Activated CD8-positive, alpha-beta T cell treated with anti-CD3 and anti-CD28 coated beads, Interleukin-2, amount 10 ng/mL, durations not matched to agents 7 days and 5 days (primary cell): ENCODE measurements at regions of chr7 and their contacts with region 1.

Region 1: DNA sequence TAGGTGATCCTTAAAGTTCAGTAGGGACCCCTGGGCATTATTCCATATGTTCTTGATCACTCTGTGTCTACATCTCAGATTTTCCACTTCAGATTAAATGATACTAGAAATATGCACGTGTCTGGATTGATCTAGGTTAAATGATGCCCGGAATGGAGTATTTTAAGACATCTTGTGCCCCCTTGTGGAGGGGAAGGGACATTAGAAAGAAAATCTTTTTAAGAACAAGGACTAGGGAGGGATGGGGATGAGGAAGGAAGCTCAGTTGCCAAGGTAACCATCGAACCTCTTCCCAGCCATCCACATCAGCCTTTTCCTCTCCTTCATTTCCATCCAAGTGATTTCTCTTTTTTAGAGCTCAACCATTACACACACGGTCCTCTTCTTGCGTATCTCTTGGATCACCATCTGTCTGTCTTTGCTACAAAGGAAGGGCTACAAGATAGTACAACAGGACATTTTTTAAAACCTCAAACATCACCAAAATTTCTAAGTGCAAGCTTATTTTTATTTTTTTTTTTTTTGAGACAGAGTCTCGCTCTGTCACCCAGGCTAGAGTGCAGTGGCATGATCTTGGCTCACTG is 40.5 kb downstream of the PRSS2 start:
- DNase-seq: peak; percentile 71
- ATAC-seq: no peak
- H3K4me3 Mint-ChIP-seq: peak overlapping the region; percentile 54
- H3K27ac Mint-ChIP-seq: peak overlapping the region; percentile 88
- H3K4me1 Mint-ChIP-seq: peaks cover 72% of the 10 kb centered on the region
- H3K27me3 Mint-ChIP-seq: peaks cover 2% of the 10 kb centered on the region

Region 2: GRCh38 chr7:141975806-141976523 is 835.3 kb before region 1 on chr7:
- CTCF ChIA-PET with region 1: interaction called, 10 read pairs
- POLR2A ChIA-PET with region 1: no interaction called
- DNase-seq: peak; percentile 77
- ATAC-seq: peak; percentile 91
- H3K4me3 Mint-ChIP-seq: peak overlapping the region; percentile 63
- H3K27ac Mint-ChIP-seq: peak overlapping the region; percentile 1
- H3K4me1 Mint-ChIP-seq: peaks cover 22% of the 10 kb centered on the region
- H3K27me3 Mint-ChIP-seq: no peaks in the 10 kb centered on the region

Region 3: DNA sequence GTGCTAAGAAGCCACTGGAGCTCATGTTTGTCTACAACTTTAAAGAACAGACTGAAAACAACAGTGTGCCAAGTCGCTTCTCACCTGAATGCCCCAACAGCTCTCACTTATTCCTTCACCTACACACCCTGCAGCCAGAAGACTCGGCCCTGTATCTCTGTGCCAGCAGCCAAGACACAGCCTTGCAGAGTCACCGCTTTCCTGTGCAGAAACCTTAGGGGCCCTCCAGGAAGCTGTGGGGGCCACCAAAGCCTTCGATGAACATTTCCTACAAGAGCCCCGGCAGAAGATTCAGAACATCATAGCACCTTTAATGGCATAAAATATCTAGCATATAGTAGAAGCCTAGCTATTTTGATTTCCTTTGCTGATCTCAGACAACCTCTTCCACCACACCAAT is 465.4 kb before region 1 on chr7:
- CTCF ChIA-PET with region 1: interaction called, 7 read pairs
- POLR2A ChIA-PET with region 1: interaction called, 15 read pairs
- DNase-seq: peak; percentile 73
- ATAC-seq: peak; percentile 93
- H3K4me3 Mint-ChIP-seq: peak overlapping the region; percentile 47
- H3K27ac Mint-ChIP-seq: peak overlapping the region; percentile 79
- H3K4me1 Mint-ChIP-seq: peaks cover 27% of the 10 kb centered on the region
- H3K27me3 Mint-ChIP-seq: peaks cover 5% of the 10 kb centered on the region

Region 4: GRCh38 chr7:142587578-142588191 is 223.6 kb before region 1 on chr7:
- CTCF ChIA-PET with region 1: interaction called, 11 read pairs
- POLR2A ChIA-PET with region 1: interaction called, 5 read pairs
- DNase-seq: peak; percentile 43
- ATAC-seq: peak; percentile 89
- H3K4me3 Mint-ChIP-seq: peak overlapping the region; percentile 17
- H3K27ac Mint-ChIP-seq: no peak overlapping the region
- H3K4me1 Mint-ChIP-seq: no peaks in the 10 kb centered on the region
- H3K27me3 Mint-ChIP-seq: no peaks in the 10 kb centered on the region

Region 5: GRCh38 chr7:142711746-142712619 is 99.3 kb before region 1 on chr7:
- CTCF ChIA-PET with region 1: interaction called, 33 read pairs
- POLR2A ChIA-PET with region 1: interaction called, 19 read pairs
- DNase-seq: peak; percentile 70
- ATAC-seq: peak; percentile 83
- H3K4me3 Mint-ChIP-seq: peak overlapping the region; percentile 74
- H3K27ac Mint-ChIP-seq: peak overlapping the region; percentile 95
- H3K4me1 Mint-ChIP-seq: peaks cover 84% of the 10 kb centered on the region
- H3K27me3 Mint-ChIP-seq: no peaks in the 10 kb centered on the region

Region 6: DNA sequence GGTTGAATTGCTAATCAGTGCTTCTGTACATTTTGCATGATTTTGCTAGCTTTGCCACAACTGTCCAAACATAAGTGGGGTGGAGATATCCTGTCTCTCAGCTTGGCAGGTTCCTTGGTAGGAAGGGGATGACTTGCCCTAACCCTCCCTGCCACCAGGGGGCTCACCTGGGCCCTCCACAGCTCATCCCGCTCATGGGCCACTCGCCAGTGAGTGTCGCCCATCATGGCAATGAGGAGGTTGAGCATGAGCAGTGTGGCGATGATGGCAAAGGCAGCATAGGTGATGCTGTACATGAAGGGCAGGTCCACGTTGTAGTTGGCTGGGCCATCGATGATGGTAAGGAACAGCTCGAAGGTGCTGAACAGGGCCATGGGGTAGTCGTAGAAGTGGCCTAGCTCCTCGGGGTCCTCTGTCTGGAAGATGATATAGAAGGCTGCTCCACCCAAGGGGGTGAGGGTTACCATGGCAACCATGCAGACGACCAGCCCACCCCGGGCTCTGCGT is 62.1 kb after region 1 on chr7:
- CTCF ChIA-PET with region 1: interaction called, 13 read pairs
- POLR2A ChIA-PET with region 1: no interaction called
- DNase-seq: peak; percentile 45
- ATAC-seq: peak; percentile 43
- H3K4me3 Mint-ChIP-seq: no peak overlapping the region
- H3K27ac Mint-ChIP-seq: no peak overlapping the region
- H3K4me1 Mint-ChIP-seq: no peaks in the 10 kb centered on the region
- H3K27me3 Mint-ChIP-seq: no peaks in the 10 kb centered on the region